AG04450 (cell line): ENCODE measurements at regions of chr17 and their contacts with region 1.

Region 1: GRCh38 chr17:80755650-80756405 is 211.2 kb downstream of the RPTOR start:
- DNase-seq: no peak
- H3K4me3 ChIP-seq: no peak overlapping the region
- H3K27ac ChIP-seq: no peak overlapping the region
- H3K27me3 ChIP-seq: no peaks in the 10 kb centered on the region
- CTCF ChIP-seq: peak; percentile 31

Region 2: DNA sequence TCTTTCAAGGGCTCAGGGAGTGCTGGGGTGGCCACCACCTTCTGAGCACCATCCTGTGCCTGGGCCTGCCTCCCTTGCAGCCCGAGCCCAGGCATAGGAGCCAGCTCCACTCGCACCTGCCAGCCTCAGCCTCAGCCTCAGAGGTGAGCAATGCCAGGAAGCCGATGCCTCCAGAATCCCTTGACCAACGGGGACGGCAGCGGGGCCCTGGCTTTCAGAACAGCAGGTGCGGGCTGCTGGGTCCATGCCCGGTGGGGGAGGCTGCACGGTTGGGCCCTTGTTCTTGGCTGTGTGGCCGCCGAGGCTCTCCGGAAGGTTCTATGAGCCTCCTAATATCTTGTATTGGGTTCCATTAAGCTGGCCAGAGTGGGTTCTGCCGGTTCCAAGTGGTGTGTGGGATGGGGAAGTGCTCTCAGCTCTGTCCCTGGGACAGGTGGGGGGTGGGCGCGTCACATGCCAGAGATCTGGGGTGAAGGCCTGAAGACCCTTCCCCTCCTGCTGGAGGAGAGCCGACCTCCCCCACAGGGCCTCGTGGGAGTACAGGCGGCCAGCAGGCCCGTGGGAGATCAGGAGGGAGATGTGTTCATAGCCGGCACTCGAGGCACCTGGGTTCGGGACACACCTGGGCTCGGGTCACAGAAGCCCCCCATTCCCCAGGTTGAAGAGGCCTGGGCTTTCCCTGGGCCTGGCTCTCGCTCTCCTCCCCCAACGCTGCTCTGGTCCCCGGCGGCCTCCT is 306.5 kb before region 1 on chr17:
- CTCF ChIA-PET with region 1: no interaction called
- POLR2A ChIA-PET with region 1: interaction called, 10 read pairs
- DNase-seq: no peak
- H3K4me3 ChIP-seq: no peak overlapping the region
- H3K27ac ChIP-seq: peak overlapping the region; percentile 82
- H3K27me3 ChIP-seq: peaks cover 5% of the 10 kb centered on the region
- CTCF ChIP-seq: no peak